Psoas muscle (tissue), 8 donors: ENCODE measurements at regions of chr7 and their contacts with region 1.

Region 1: DNA sequence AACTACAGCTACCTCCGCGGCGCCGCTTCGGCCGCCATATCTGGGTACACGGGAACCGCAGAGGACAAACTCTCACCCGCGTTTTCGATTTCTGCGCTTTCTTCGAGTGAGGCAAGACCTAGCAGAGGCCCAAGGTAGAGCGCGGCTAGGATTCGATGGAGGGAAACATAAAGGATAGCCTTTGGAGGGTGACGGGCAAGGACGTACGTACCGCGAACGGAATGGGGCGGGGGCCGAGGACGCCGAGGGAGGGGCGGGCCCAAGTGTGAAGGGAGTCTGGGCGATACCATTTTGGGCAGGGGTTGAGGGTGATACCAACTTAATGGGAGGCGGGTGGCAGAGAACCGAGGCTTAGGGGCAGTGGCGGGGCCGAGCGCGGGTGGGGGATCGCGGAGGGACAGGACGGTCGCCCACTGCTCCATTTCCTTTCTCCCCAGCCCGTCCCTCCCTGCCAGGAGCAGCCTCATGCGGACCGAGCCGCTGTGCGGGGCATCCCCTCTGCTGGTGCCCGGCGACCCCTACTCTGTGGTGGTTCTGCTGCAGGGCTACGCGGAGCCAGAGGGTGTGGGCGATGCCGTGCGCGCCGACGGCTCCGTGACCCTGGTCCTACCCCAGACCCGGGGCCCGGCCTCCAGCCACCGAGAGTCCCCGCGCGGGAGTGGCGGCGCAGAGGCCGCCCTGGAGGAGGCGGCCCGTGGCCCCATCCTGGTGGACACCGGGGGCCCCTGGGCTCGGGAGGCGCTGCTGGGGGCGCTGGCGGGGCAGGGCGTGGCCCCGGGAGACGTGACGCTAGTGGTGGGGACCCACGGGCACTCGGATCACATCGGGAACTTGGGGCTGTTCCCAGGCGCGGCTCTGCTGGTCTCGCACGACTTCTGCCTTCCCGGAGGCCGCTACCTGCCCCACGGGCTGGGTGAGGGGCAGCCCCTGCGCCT is at the start of gene MBLAC1:
- DNase-seq: peak; percentile 89 to 93
- ATAC-seq: peak; percentile 94 to 96 (median 95)
- H3K4me3 ChIP-seq: peak within 1 kb of the TSS; percentile 92
- H3K27ac ChIP-seq: peak within 1 kb of the TSS; percentile 91
- H3K4me1 ChIP-seq: peaks cover 17% of the 10 kb centered on the region
- H3K27me3 ChIP-seq: no peaks in the 10 kb centered on the region
- CTCF ChIP-seq: no peak
- total RNA-seq, gene MBLAC1: 0.91 to 2.6 (median 1.7) TPM

Region 2: DNA sequence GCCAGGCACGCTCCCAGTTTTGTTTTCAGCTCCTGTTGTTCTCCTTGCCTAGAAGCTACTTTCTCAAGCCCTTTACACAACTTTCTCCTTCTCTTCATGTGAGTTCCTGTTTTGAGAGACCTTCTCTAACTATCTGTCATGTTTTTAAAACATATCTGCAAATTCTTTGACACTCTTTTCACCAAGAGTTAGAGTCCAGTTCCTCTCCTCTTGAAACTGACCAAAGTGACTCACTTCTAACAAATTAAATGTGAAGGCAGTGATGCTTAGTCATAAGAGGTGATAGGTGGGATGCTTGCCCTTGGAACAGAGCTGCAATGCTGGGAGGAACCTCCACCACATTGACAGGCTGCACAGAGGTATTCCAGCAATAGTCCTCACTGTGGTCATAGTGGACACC is 485.2 kb before region 1 on chr7:
- intact Hi-C with region 1: no loop called
- DNase-seq: no peak
- ATAC-seq: no peak
- H3K4me3 ChIP-seq: no peak overlapping the region
- H3K27ac ChIP-seq: no peak overlapping the region
- H3K4me1 ChIP-seq: no peaks in the 10 kb centered on the region
- H3K27me3 ChIP-seq: no peaks in the 10 kb centered on the region
- CTCF ChIP-seq: no peak

Region 3: GRCh38 chr7:99990460-99990852 is 136.7 kb before region 1 on chr7:
- intact Hi-C with region 1: loop called in 1 of 2 experiments (anchors 5 kb)
- DNase-seq: no peak
- ATAC-seq: peak in 1 of 4 donors; percentile 43
- H3K4me3 ChIP-seq: peak overlapping the region; percentile 55
- H3K27ac ChIP-seq: no peak overlapping the region
- H3K4me1 ChIP-seq: no peaks in the 10 kb centered on the region
- H3K27me3 ChIP-seq: no peaks in the 10 kb centered on the region
- CTCF ChIP-seq: no peak

Region 4: GRCh38 chr7:100088621-100089457 is 38.4 kb before region 1 on chr7 and contains the start of gene COPS6:
- intact Hi-C with region 1: loop called (anchors 5 kb)
- DNase-seq: peak; percentile 90 to 94
- ATAC-seq: peak; percentile 85 to 95 (median 92)
- H3K4me3 ChIP-seq: peak within 1 kb of the TSS; percentile 85
- H3K27ac ChIP-seq: peak within 1 kb of the TSS; percentile 90
- H3K4me1 ChIP-seq: peaks cover 20% of the 10 kb centered on the region
- H3K27me3 ChIP-seq: no peaks in the 10 kb centered on the region
- CTCF ChIP-seq: no peak
- total RNA-seq, gene COPS6: 82.9 to 130 (median 111) TPM